Natural killer cell (primary cell): ENCODE measurements at regions of chr7 and their contacts with region 1.

Region 1: GRCh38 chr7:35694781-35695472 is at the start of gene HERPUD2:
- DNase-seq: peak; percentile 90 to 96
- ATAC-seq: peak; percentile 80 to 94 (median 88)
- H3K4me3 ChIP-seq: peak within 1 kb of the TSS; percentile 90
- H3K4me3 Mint-ChIP-seq: peak within 1 kb of the TSS; percentile 98
- H3K27ac ChIP-seq: peak within 1 kb of the TSS; percentile 95
- H3K27ac Mint-ChIP-seq: peak within 1 kb of the TSS; percentile 97 to 98
- H3K4me1 ChIP-seq: peaks cover 35% of the 10 kb centered on the region
- H3K4me1 Mint-ChIP-seq: peaks cover 66 to 70% of the 10 kb centered on the region in 2 donors
- H3K27me3 ChIP-seq: no peaks in the 10 kb centered on the region
- H3K27me3 Mint-ChIP-seq: no peaks in the 10 kb centered on the region
- CTCF ChIP-seq: no peak
- total RNA-seq, gene HERPUD2: 103 to 112 (median 111) TPM

Region 2: DNA sequence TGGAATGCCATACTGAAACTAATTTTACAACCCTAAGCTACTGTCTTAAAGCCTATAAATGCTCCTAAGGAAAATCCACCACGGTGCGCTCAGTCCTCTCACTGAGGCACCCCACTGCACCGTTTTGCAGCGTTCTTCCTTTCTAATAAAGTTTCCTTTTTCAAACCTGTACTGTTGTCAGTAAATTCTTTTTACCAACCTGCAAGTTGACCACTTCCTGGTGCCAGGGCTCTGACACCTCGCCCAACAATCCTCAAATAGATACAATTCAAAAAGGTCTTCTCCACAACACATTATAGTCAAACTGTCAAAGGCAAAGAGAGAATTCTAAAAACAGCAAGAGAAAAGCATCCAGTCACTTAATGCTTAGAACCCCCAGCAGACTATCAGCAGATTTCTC is 42.8 kb before region 1 on chr7:
- intact Hi-C with region 1: loop called (anchors 5 kb)
- DNase-seq: peak; percentile 33 to 47
- ATAC-seq: peak; percentile 64 to 88 (median 74)
- H3K4me3 ChIP-seq: no peak overlapping the region
- H3K4me3 Mint-ChIP-seq: peak overlapping the region; percentile 90
- H3K27ac ChIP-seq: peak overlapping the region; percentile 42
- H3K27ac Mint-ChIP-seq: peak overlapping the region; percentile 83 to 88
- H3K4me1 ChIP-seq: peaks cover 21% of the 10 kb centered on the region
- H3K4me1 Mint-ChIP-seq: peaks cover 82 to 85% of the 10 kb centered on the region in 2 donors
- H3K27me3 ChIP-seq: no peaks in the 10 kb centered on the region
- H3K27me3 Mint-ChIP-seq: no peaks in the 10 kb centered on the region
- CTCF ChIP-seq: no peak

Region 3: GRCh38 chr7:35681231-35682029 is 13.5 kb before region 1 on chr7:
- intact Hi-C with region 1: loop called (anchors 2 kb)
- DNase-seq: no peak
- ATAC-seq: peak; percentile 71 to 75 (median 72)
- H3K4me3 ChIP-seq: no peak overlapping the region
- H3K4me3 Mint-ChIP-seq: peak overlapping the region; percentile 41
- H3K27ac ChIP-seq: no peak overlapping the region
- H3K27ac Mint-ChIP-seq: peak overlapping the region; percentile 37 to 83
- H3K4me1 ChIP-seq: peaks cover 9% of the 10 kb centered on the region
- H3K4me1 Mint-ChIP-seq: peaks cover 56 to 57% of the 10 kb centered on the region in 2 donors
- H3K27me3 ChIP-seq: no peaks in the 10 kb centered on the region
- H3K27me3 Mint-ChIP-seq: no peaks in the 10 kb centered on the region
- CTCF ChIP-seq: no peak

Region 4: DNA sequence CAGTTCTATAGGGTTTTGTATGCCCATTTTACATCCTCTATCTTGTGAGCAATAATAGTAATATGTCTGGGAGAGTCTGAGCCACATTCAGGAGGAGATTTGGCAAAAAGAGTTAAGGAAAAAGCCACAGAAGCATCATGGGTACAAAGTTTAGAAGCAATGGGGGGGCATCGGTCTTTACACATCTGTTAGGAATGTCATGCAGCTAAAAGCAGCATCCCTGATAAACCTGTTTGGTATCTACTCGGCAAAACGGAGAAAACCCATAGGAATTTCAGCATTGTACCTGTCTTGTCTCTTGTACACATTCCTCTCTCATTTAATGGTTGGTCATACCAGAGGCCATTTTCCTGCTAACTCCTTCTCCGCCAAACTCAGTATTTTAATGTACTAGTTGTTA is 12.5 kb after region 1 on chr7:
- intact Hi-C with region 1: loop called (anchors 1 kb)
- DNase-seq: no peak
- ATAC-seq: no peak
- H3K4me3 ChIP-seq: no peak overlapping the region
- H3K4me3 Mint-ChIP-seq: no peak overlapping the region
- H3K27ac ChIP-seq: no peak overlapping the region
- H3K27ac Mint-ChIP-seq: no peak overlapping the region
- H3K4me1 ChIP-seq: peaks cover 12% of the 10 kb centered on the region
- H3K4me1 Mint-ChIP-seq: peaks cover 21 to 23% of the 10 kb centered on the region in 2 donors
- H3K27me3 ChIP-seq: no peaks in the 10 kb centered on the region
- H3K27me3 Mint-ChIP-seq: no peaks in the 10 kb centered on the region
- CTCF ChIP-seq: no peak

Region 5: GRCh38 chr7:35723011-35723410 is 28.1 kb after region 1 on chr7:
- intact Hi-C with region 1: loop called (anchors 1 kb)
- DNase-seq: peak in 1 of 2 donors; percentile 72
- ATAC-seq: peak; percentile 64 to 81 (median 73)
- H3K4me3 ChIP-seq: no peak overlapping the region
- H3K4me3 Mint-ChIP-seq: no peak overlapping the region
- H3K27ac ChIP-seq: no peak overlapping the region
- H3K27ac Mint-ChIP-seq: peak overlapping the region; percentile 85 to 96
- H3K4me1 ChIP-seq: peaks cover 41% of the 10 kb centered on the region
- H3K4me1 Mint-ChIP-seq: peaks cover 49 to 50% of the 10 kb centered on the region in 2 donors
- H3K27me3 ChIP-seq: no peaks in the 10 kb centered on the region
- H3K27me3 Mint-ChIP-seq: no peaks in the 10 kb centered on the region
- CTCF ChIP-seq: no peak

Region 6: GRCh38 chr7:35729061-35729783 is 34.3 kb after region 1 on chr7:
- intact Hi-C with region 1: loop called (anchors 1 kb)
- DNase-seq: peak; percentile 66 to 81
- ATAC-seq: peak; percentile 71 to 91 (median 83)
- H3K4me3 ChIP-seq: no peak overlapping the region
- H3K4me3 Mint-ChIP-seq: peak overlapping the region; percentile 84
- H3K27ac ChIP-seq: peak overlapping the region; percentile 88
- H3K27ac Mint-ChIP-seq: peak overlapping the region; percentile 96 to 97
- H3K4me1 ChIP-seq: peaks cover 71% of the 10 kb centered on the region
- H3K4me1 Mint-ChIP-seq: peaks cover 59 to 76% of the 10 kb centered on the region in 2 donors
- H3K27me3 ChIP-seq: no peaks in the 10 kb centered on the region
- H3K27me3 Mint-ChIP-seq: peaks cover 0 to 4% of the 10 kb centered on the region in 2 donors
- CTCF ChIP-seq: no peak

Region 7: GRCh38 chr7:35781200-35781701 is 86.3 kb after region 1 on chr7:
- intact Hi-C with region 1: no loop called
- DNase-seq: no peak
- ATAC-seq: no peak
- H3K4me3 ChIP-seq: no peak overlapping the region
- H3K4me3 Mint-ChIP-seq: no peak overlapping the region
- H3K27ac ChIP-seq: no peak overlapping the region
- H3K27ac Mint-ChIP-seq: no peak overlapping the region
- H3K4me1 ChIP-seq: no peaks in the 10 kb centered on the region
- H3K4me1 Mint-ChIP-seq: peaks cover 0 to 5% of the 10 kb centered on the region in 2 donors
- H3K27me3 ChIP-seq: no peaks in the 10 kb centered on the region
- H3K27me3 Mint-ChIP-seq: no peaks in the 10 kb centered on the region
- CTCF ChIP-seq: no peak

Region 8: GRCh38 chr7:35801392-35802101 is 106.6 kb after region 1 on chr7:
- intact Hi-C with region 1: loop called (anchors 1 kb)
- DNase-seq: peak; percentile 81 to 85
- ATAC-seq: peak; percentile 31 to 52 (median 50)
- H3K4me3 ChIP-seq: peak overlapping the region; percentile 83
- H3K4me3 Mint-ChIP-seq: peak overlapping the region; percentile 98
- H3K27ac ChIP-seq: peak overlapping the region; percentile 96
- H3K27ac Mint-ChIP-seq: peak overlapping the region; percentile 97 to 98
- H3K4me1 ChIP-seq: peaks cover 23% of the 10 kb centered on the region
- H3K4me1 Mint-ChIP-seq: peaks cover 54 to 58% of the 10 kb centered on the region in 2 donors
- H3K27me3 ChIP-seq: no peaks in the 10 kb centered on the region
- H3K27me3 Mint-ChIP-seq: no peaks in the 10 kb centered on the region
- CTCF ChIP-seq: no peak